GM23248 (cell line): ENCODE measurements at regions of chr7 and their contacts with region 1.

Region 1: DNA sequence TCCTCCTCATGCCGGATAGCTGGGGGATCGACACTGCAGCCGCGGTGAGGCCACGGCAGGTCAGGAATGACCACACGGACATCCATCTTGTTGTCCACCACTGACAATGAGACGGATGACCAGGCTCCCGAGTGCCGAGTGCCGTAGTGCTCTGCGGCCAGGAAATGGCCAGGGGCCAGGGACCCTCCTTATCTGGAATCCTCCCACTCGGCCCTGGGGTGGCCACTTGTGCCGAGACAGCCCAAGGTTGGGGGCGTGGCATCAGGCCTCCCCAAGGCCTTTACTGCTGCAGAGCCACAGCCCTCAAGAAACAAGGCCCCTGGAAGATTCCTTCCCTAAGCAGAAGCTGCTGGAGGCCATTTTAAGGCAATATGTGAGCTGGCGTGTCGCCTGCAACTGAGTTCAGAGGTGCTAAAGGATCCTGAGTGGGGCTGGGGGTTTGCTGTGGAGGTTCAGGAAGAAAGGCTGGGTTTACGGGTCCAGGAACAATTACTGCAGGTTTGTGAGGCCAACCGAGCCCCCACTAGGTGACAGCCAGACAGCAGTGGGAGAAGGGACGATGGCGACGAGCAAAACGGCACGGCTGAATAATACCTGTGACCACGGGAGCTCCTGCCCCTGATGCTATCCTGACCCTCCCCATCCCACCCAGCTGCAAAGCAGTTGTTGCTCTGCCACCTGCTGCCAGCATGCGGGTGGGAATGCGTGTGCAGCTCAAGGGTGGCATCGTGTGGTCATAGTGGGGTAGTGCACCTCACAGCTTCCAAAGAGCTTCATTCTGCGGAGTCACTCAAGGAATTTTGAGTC is 31.6 kb upstream of the LEP start:
- DNase-seq: peak; percentile 86
- H3K4me3 ChIP-seq: no peak overlapping the region
- H3K27ac ChIP-seq: no peak overlapping the region
- H3K4me1 ChIP-seq: no peaks in the 10 kb centered on the region
- H3K27me3 ChIP-seq: peaks cover 7% of the 10 kb centered on the region

Region 2: GRCh38 chr7:127726476-127726875 is 483.0 kb before region 1 on chr7:
- in situ Hi-C with region 1: loop called (anchors 10 kb)
- DNase-seq: no peak
- H3K4me3 ChIP-seq: no peak overlapping the region
- H3K27ac ChIP-seq: no peak overlapping the region
- H3K4me1 ChIP-seq: no peaks in the 10 kb centered on the region
- H3K27me3 ChIP-seq: no peaks in the 10 kb centered on the region

Region 3: DNA sequence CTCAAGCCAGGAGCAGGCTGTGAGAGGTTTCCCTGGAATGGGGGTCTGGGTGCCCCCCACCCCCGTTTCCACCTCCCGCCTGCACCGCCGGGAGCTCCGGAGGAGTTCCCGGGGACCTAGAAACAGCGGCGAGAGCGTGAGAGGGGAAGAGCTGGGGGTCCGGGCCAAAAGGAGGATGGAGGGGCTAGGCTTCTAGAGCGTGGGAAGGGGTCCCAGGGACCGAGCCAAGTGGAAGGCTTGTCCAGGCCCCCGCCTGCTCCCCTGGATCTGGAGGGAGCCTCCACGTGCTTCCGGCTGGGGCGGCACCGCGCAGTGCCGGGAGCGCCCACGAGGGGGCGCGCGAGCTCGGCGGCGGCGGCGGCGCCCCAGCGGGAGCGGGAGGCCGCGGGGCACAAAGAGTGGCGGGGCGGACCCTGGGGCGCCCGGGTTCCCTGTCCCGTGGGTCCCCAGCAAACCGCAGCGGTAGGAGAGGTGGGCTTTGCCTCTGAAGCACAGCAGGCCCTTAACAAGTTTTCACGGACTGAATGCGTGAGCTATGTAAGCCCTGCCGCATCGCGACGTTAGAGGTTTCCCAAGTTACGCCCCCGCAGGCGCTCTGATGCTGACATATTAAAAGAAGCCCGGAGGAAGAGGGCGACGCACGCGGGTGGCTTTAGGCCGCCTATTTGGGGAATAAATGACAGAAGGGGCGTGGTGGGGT is 73.8 kb before region 1 on chr7:
- in situ Hi-C with region 1: loop called (anchors 10 kb)
- DNase-seq: peak; percentile 92
- H3K4me3 ChIP-seq: peak overlapping the region; percentile 72
- H3K27ac ChIP-seq: no peak overlapping the region
- H3K4me1 ChIP-seq: 0 out of 2 replicates have a peak, but pooled peaks cover 3% of the 10 kb centered on the region
- H3K27me3 ChIP-seq: peaks cover 76% of the 10 kb centered on the region